GM10248 (cell line): ENCODE measurements at regions of chr2 and their contacts with region 1.

Region 1: GRCh38 chr2:88831792-88832248 is 140.3 kb downstream of the RPIA start:
- DNase-seq: peak; percentile 74
- CTCF ChIP-seq: peak; percentile 99

Region 2: DNA sequence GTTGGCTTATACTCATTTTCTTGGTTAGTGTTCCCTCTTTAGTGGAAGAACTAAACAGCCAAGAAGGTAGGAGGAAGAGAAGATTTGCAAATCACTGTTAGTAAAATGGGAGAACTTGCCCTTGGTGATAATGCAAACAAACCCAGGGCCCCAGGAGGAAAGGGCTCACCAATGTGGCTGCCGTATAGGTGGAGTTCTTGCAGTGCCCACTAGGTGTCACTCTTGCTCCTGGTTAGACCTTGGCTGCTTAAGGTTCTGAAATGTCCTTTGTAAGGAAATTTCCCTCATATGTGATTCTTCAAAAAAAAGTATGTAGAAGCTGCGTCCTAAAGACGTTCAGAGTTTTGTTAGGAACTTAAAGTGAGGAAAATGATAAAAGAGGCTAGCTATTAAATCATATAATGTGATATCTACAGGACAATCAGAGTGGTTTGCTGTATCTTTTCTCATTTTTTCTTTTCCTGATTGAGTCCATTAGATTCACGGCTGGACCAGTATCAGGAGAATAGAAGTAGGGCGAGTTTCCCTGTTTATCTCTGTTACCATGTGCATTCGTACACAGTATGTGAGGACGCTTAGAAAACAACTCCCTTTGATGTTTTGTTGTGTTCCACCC is 91.7 kb before region 1 on chr2:
- CTCF ChIA-PET with region 1: interaction called, 22 read pairs
- POLR2A ChIA-PET with region 1: no interaction called
- DNase-seq: peak; percentile 68
- CTCF ChIP-seq: peak; percentile 85

Region 3: GRCh38 chr2:88746929-88747490 is 84.8 kb before region 1 on chr2:
- CTCF ChIA-PET with region 1: interaction called, 23 read pairs
- POLR2A ChIA-PET with region 1: no interaction called
- DNase-seq: no peak
- CTCF ChIP-seq: no peak

Region 4: GRCh38 chr2:88753833-88754584 is 77.8 kb before region 1 on chr2:
- CTCF ChIA-PET with region 1: interaction called, 23 read pairs
- POLR2A ChIA-PET with region 1: interaction called, 3 read pairs
- DNase-seq: peak; percentile 69
- CTCF ChIP-seq: no peak

Region 5: GRCh38 chr2:88857951-88858411 is 26.2 kb after region 1 on chr2:
- CTCF ChIA-PET with region 1: interaction called, 460 read pairs
- POLR2A ChIA-PET with region 1: interaction called, 79 read pairs
- DNase-seq: peak; percentile 12
- CTCF ChIP-seq: no peak

Region 6: DNA sequence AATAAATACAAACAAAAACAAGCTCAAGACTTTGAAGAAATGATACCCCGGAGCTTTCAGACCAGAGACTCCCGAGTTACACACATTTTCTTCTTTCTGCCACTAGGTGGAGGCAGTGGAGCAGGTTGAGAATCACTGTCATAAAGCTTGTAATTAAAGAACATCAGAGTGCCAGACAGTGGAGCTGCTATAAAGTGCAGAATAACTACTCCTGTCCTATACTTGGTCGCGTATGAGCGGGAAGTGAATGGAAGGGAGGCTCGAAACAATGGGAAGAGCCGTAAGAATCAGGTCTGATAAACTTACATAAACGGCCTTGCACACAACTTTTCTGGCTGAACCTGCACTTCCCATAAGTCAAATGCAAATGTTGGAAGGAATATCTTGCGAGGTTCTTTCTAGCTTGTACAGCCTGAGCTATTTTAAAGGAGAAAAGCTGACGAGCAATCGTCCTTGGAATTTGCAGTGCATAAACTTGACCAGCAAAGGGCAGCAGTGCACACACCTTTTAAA is 48.7 kb after region 1 on chr2:
- CTCF ChIA-PET with region 1: interaction called, 36 read pairs
- POLR2A ChIA-PET with region 1: no interaction called
- DNase-seq: no peak
- CTCF ChIP-seq: peak; percentile 28

Region 7: DNA sequence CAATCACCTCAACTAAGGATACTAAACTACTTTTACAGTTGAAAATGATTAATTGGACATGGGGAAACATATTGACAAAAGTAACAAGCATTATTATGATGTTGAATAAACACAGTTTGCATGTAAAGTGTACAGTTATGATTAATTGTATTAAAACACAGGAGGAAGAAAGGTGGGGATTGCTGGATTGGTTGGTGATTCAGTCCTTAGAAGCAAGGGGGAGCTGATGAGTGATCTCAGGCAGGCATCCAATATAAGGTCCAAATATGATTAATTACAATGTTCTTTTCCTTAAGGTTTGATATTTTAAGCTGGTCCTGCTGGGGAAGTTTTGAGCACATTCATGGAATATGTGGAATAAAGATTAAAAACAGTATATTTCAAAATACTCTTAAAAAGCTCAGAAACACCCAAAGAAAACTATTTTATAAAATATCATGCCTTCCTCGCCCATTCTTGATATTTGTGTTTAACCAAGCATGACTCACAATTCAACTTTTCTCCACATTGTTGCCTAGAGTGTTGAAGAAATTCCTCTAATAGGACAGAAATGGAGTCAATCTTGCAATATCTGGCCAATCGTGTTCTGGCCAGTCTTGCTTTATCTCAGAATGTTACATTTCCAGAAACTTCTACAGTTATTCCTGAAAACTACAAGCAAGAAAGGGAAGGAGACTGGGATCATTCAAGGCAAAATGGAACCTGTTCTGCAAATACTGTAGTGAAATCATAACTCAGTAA is 127.8 kb after region 1 on chr2:
- CTCF ChIA-PET with region 1: no interaction called
- POLR2A ChIA-PET with region 1: no interaction called
- DNase-seq: no peak
- CTCF ChIP-seq: no peak